PC-9 (cell line): ENCODE measurements at regions of chr10 and their contacts with region 1.

Region 1: DNA sequence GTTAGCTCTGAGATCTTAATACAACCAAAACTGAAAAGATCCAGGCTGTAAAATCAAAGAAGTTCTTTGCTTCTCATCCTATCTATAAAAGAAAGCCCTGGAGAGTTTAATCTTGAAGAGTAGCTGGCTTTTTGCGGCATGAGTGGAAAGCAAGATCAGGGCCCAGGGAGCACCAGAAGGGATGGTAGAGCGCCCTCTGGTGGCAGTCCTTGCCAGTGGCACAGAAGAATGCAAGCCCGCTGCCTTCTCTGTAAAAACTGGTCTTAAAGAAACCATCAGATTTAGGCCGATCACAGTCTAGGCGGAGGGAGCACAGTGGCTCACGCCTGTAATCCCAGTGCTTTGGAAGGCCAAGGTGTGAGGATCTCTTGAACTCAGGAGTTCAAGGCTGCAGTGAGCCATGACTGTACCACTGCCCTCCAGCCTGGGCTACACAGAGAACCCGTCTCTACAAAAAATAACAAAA is 35.6 kb downstream of the CPN1 start:
- DNase-seq: peak; percentile 37 to 71
- H3K4me3 ChIP-seq: no peak overlapping the region
- H3K27ac ChIP-seq: no peak overlapping the region
- H3K4me1 ChIP-seq: no peaks in the 10 kb centered on the region; the same call in 1 of the 2 replicates
- H3K27me3 ChIP-seq: no peaks in the 10 kb centered on the region
- CTCF ChIP-seq: peak; percentile 86

Region 2: GRCh38 chr10:99435986-99436638 is 609.9 kb before region 1 on chr10:
- CTCF ChIA-PET with region 1: no interaction called
- POLR2A ChIA-PET with region 1: no interaction called
- intact Hi-C with region 1: no loop called
- DNase-seq: peak in 1 of 2 experiments; percentile 40
- H3K4me3 ChIP-seq: no peak overlapping the region
- H3K27ac ChIP-seq: no peak overlapping the region
- H3K4me1 ChIP-seq: no peaks in the 10 kb centered on the region
- H3K27me3 ChIP-seq: no peaks in the 10 kb centered on the region
- CTCF ChIP-seq: peak; percentile 68

Region 3: DNA sequence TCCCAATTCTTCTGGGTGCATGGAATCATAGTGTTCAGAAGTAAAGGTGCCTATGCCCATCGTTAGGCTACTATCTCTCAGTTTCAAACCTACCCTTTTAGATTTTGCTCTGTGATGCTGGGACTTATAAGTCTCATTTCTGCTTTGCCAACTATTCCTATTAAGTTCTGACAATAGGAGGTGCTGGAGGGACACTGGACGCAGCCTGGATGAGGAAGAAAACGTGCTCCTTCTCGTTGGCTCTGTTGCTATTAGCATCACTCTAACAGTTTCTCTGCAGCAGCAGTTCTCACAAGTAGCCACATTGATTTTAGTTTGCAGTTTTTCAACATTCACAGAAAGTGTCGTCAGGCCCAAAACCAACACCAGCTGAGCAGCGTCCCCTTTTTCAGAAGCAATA is 191.2 kb before region 1 on chr10:
- CTCF ChIA-PET with region 1: interaction called, 5 read pairs
- POLR2A ChIA-PET with region 1: no interaction called
- intact Hi-C with region 1: loop called (anchors 5 kb)
- DNase-seq: no peak
- H3K4me3 ChIP-seq: no peak overlapping the region
- H3K27ac ChIP-seq: no peak overlapping the region
- H3K4me1 ChIP-seq: no peaks in the 10 kb centered on the region
- H3K27me3 ChIP-seq: no peaks in the 10 kb centered on the region
- CTCF ChIP-seq: no peak

Region 4: DNA sequence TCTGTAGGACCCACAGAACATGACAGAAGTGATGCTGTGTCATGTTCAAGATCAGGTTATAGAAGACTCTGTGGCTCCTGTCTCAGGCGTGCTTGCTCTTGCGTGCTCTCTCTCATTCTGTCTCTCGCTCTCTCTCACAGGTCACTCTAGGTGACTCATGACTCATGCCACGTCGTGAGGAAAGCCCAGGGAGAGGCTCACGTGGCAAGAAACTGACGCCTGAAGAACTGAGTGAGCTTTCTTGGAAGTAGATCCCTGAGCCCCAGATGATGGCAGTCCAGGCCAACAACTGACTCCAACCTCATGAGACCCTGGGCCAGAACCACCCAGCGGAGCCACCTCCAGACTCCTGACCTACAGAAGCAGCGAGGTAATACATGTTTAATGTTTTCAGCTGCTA is 139.6 kb before region 1 on chr10:
- CTCF ChIA-PET with region 1: interaction called, 4 read pairs
- POLR2A ChIA-PET with region 1: no interaction called
- intact Hi-C with region 1: loop called (anchors 1 kb)
- DNase-seq: peak; percentile 75 to 88
- H3K4me3 ChIP-seq: no peak overlapping the region
- H3K27ac ChIP-seq: peak overlapping the region; percentile 63
- H3K4me1 ChIP-seq: peaks cover 22% of the 10 kb centered on the region
- H3K27me3 ChIP-seq: no peaks in the 10 kb centered on the region
- CTCF ChIP-seq: peak; percentile 51

Region 5: DNA sequence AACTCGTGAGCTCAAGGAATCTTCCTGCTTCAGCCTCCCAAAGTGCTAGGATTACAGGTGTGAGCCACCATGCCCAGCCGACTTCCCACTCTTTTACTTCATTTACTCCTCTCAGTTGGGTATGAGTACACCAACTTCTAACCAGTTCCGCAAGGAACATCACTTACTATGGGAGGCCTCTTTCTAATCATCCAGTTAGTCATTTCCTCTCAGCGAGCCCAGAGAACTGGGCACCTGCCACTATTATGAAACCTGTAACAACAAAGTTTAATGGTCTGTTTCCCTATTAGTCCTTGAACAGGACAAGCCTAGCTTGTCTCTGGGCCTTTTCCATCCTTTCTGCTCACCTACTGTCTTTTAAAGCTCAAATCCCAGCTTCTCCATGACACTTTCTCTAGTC is 125.2 kb before region 1 on chr10:
- CTCF ChIA-PET with region 1: no interaction called
- POLR2A ChIA-PET with region 1: no interaction called
- intact Hi-C with region 1: loop called (anchors 5 kb)
- DNase-seq: peak in 1 of 2 experiments; percentile 81
- H3K4me3 ChIP-seq: no peak overlapping the region
- H3K27ac ChIP-seq: peak overlapping the region; percentile 88
- H3K4me1 ChIP-seq: peaks cover 53% of the 10 kb centered on the region
- H3K27me3 ChIP-seq: no peaks in the 10 kb centered on the region
- CTCF ChIP-seq: no peak

Region 6: DNA sequence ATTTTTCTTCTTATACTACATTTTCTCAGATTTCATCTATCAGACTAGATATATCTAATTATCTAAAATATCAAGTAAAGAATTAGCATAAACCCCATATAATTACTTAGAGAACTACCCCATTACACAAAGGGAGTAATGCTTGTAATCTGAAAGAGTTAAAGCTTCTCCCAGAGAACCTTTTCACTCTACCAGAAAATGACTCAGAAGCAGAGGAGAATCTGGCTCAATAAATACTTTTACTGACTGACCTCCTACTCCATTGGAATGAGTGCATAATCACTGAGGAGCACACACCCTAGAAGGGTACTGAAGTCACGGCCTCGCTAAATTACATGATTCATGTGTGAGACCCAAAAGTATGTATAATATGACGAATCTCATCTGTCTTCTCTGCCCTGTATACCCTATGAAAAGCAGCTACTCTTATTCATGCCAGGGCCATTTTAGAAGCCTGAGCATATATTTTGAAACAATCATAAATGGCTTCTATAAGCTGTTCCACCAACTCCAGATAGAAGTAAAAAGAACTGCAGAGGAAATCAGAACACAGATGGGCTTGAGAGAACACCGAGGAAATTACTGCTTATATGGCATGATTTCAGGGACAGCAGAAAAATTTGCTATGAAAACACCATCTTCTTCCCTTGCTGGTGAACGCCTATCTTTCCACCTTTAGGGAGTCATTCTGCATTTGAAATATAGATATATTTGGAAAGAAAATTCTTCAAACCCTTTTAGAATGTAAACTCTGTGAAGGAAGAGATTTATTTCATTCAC is 69.0 kb before region 1 on chr10:
- CTCF ChIA-PET with region 1: interaction called, 3 read pairs
- POLR2A ChIA-PET with region 1: no interaction called
- intact Hi-C with region 1: loop called (anchors 10 kb)
- DNase-seq: peak; percentile 29 to 94
- H3K4me3 ChIP-seq: peak overlapping the region; percentile 44
- H3K27ac ChIP-seq: peak overlapping the region; percentile 89
- H3K4me1 ChIP-seq: peaks cover 26% of the 10 kb centered on the region
- H3K27me3 ChIP-seq: no peaks in the 10 kb centered on the region
- CTCF ChIP-seq: no peak

Region 7: GRCh38 chr10:100009793-100010676 is 36.0 kb before region 1 on chr10 and contains the start of gene DNMBP:
- CTCF ChIA-PET with region 1: interaction called, 11 read pairs
- POLR2A ChIA-PET with region 1: no interaction called
- intact Hi-C with region 1: loop called (anchors 1 kb)
- DNase-seq: peak; percentile 59 to 76
- H3K4me3 ChIP-seq: peak within 1 kb of the TSS; percentile 81
- H3K27ac ChIP-seq: peak within 1 kb of the TSS; percentile 93; the same call in 1 of the 2 replicates
- H3K4me1 ChIP-seq: peaks cover 34% of the 10 kb centered on the region
- H3K27me3 ChIP-seq: no peaks in the 10 kb centered on the region
- CTCF ChIP-seq: peak; percentile 58
- total RNA-seq, gene DNMBP: 11.8 and 14.9 TPM in 2 replicates

Region 8: DNA sequence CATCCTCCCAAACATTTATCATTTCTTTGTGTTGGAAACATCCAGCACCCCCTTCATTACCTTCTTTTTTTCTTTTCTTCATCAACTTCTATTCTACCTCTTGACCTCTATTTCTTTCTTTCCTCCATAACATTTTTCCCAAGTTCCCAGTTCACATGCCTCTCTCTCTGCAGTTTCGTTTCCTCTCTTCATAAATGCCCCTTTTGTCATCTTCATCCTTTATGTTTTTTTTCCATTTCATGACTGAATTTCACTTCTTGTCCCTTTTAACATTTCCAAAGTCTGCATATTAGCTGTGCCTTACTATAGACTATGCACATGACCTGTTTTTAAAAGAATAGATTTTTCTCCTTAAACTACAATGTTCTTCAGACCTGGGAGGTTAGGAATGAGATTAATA is 11.9 kb after region 1 on chr10:
- CTCF ChIA-PET with region 1: no interaction called
- POLR2A ChIA-PET with region 1: no interaction called
- intact Hi-C with region 1: no loop called
- DNase-seq: no peak
- H3K4me3 ChIP-seq: no peak overlapping the region
- H3K27ac ChIP-seq: no peak overlapping the region
- H3K4me1 ChIP-seq: no peaks in the 10 kb centered on the region
- H3K27me3 ChIP-seq: no peaks in the 10 kb centered on the region
- CTCF ChIP-seq: no peak

Region 9: GRCh38 chr10:100128951-100129350 is 82.9 kb after region 1 on chr10:
- CTCF ChIA-PET with region 1: no interaction called
- POLR2A ChIA-PET with region 1: interaction called, 18 read pairs
- intact Hi-C with region 1: no loop called
- DNase-seq: no peak
- H3K4me3 ChIP-seq: no peak overlapping the region
- H3K27ac ChIP-seq: no peak overlapping the region
- H3K4me1 ChIP-seq: no peaks in the 10 kb centered on the region
- H3K27me3 ChIP-seq: no peaks in the 10 kb centered on the region
- CTCF ChIP-seq: no peak

Region 10: GRCh38 chr10:100303724-100304319 is 257.8 kb after region 1 on chr10:
- CTCF ChIA-PET with region 1: no interaction called
- POLR2A ChIA-PET with region 1: no interaction called
- intact Hi-C with region 1: no loop called
- DNase-seq: peak in 1 of 2 experiments; percentile 37
- H3K4me3 ChIP-seq: no peak overlapping the region
- H3K27ac ChIP-seq: no peak overlapping the region
- H3K4me1 ChIP-seq: no peaks in the 10 kb centered on the region; the same call in 1 of the 2 replicates
- H3K27me3 ChIP-seq: no peaks in the 10 kb centered on the region
- CTCF ChIP-seq: peak; percentile 64

Region 11: GRCh38 chr10:101319241-101319915 is 1273.3 kb after region 1 on chr10:
- CTCF ChIA-PET with region 1: no interaction called
- POLR2A ChIA-PET with region 1: no interaction called
- intact Hi-C with region 1: no loop called
- DNase-seq: no peak
- H3K4me3 ChIP-seq: no peak overlapping the region
- H3K27ac ChIP-seq: no peak overlapping the region
- H3K4me1 ChIP-seq: no peaks in the 10 kb centered on the region
- H3K27me3 ChIP-seq: peaks cover 25% of the 10 kb centered on the region
- CTCF ChIP-seq: no peak